Spleen (tissue), 13 donors: ENCODE measurements at regions of chr9 and their contacts with region 1.

Region 1: GRCh38 chr9:80218328-80218727 is 646.6 kb downstream of the TLE4 start:
- DNase-seq: no peak
- H3K4me3 ChIP-seq: no peak overlapping the region
- H3K27ac ChIP-seq: no peak overlapping the region
- H3K4me1 ChIP-seq: no peaks in the 10 kb centered on the region
- H3K27me3 ChIP-seq: no peaks in the 10 kb centered on the region
- CTCF ChIP-seq: no peak
- POLR2A ChIP-seq: no peak

Region 2: GRCh38 chr9:80282766-80283165 is 64.4 kb after region 1 on chr9:
- intact Hi-C with region 1: loop called (anchors 10 kb)
- DNase-seq: no peak
- H3K4me3 ChIP-seq: no peak overlapping the region
- H3K27ac ChIP-seq: no peak overlapping the region
- H3K4me1 ChIP-seq: no peaks in the 10 kb centered on the region
- H3K27me3 ChIP-seq: no peaks in the 10 kb centered on the region
- CTCF ChIP-seq: no peak
- POLR2A ChIP-seq: no peak

Region 3: DNA sequence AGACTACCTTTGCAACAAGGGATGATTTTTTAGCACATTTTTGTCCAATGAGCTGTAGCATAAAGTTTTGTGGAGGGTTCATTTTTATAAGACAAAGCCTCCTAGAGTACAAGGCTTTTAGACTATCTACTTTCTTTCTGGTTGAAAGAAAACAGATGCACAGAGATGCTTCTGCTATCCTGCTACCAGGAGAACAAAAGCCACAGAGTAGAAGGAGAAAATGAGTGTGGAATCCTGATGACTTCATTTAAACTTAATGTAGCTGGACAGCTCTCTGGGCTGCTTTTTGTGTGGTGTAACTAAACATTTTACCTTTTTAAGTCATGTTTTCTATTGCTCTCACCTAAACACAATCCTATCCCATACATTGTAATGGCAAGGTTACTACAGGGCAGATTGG is 461.6 kb after region 1 on chr9:
- intact Hi-C with region 1: no loop called
- DNase-seq: no peak
- H3K4me3 ChIP-seq: no peak overlapping the region
- H3K27ac ChIP-seq: no peak overlapping the region
- H3K4me1 ChIP-seq: no peaks in the 10 kb centered on the region
- H3K27me3 ChIP-seq: no peaks in the 10 kb centered on the region
- CTCF ChIP-seq: no peak
- POLR2A ChIP-seq: no peak